B cell (primary cell): ENCODE measurements at regions of chr14 and their contacts with region 1.

Region 1: DNA sequence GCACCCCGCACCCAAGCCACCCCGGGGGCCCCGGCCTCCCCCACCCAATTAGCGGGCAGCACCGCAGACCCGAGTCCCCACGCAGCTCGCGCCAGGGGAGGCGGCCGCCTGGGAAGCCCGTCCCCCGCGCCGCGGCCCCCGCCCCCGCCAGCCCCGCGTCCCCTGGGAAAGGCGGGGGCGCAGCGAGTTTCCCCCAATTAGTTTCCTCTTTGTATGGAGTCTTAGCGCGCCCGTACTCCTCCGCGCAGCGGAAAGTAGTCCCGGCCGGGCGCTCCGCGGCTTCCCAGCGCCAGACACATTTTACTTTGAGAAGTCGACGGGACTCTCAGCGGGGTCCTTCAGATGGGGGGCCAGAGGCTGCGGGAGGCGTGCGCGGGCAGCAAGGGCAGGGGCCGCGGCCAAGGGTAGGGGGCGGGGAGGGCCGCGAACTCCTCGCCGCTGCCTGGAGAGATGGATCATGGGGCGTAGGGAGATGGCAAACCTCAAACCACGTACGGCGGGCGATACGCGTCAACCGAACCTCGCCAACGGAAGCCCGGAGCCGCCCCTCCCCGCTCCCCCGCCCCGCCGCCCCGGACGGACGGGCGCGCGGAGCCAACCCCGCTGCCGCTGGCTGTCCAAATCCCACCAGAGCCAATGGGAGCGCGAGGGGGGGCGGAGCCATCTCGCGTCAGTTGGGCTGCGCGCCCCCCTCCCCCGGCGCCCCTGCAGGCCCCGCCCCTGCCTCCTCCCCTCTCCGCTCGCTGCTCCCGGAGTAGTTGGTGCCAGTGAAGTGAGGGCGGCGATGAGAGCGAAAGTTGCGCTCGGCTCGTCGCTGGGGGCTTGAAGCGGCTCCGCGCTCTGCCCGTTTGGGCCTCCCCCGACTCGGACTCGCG is at the start of gene RCOR1:
- DNase-seq: peak; percentile 97
- ATAC-seq: peak; percentile 82
- H3K4me3 ChIP-seq: peak within 1 kb of the TSS; percentile 73 to 91 (median 83)
- H3K4me3 Mint-ChIP-seq: peak within 1 kb of the TSS; percentile 89
- H3K27ac ChIP-seq: peak within 1 kb of the TSS; percentile 82 to 95
- H3K27ac Mint-ChIP-seq: peak within 1 kb of the TSS; percentile 97
- H3K4me1 ChIP-seq: peaks cover 10 to 22% of the 10 kb centered on the region in 2 donors
- H3K4me1 Mint-ChIP-seq: peaks cover 26% of the 10 kb centered on the region
- H3K27me3 ChIP-seq: no peaks in the 10 kb centered on the region
- H3K27me3 Mint-ChIP-seq: no peaks in the 10 kb centered on the region
- CTCF ChIP-seq: no peak
- total RNA-seq, gene RCOR1: 37.1 and 38.4 TPM in 2 replicates

Region 2: DNA sequence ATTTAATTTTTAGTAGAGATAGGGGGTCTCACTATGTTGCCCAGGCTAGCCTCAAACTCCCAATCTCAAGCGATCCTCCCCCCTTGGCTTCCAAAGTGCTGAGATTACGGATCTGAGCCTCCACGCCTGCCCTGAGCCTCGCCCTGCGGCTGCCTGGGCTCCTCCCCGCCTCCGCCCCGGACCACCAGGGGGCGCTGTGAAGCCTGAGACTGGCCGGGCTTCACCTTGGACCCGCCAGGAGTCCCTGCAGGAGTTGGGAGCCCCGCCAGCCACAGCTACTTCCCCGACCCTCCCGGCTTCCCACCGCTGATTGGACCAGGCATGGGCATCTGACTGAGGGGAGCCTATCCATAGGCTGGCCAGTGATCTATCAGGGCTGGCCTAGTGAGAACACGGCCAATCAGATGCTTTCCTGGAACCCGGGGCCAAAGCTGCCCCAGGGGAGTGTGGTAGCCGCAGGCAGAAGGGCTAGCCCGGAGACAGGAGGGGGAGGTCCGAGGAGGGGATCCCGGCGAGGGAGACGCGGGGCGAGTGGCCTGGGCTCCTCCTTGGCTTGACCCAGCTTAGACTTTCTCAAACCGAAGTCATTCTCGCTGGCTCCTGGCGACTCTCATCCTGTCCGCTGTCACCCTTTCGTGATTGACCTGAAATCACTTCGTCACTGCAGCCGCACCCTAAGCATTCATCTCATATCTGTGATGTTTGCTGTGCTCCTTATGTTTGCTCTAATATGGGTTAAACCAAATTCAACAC is 67.5 kb before region 1 on chr14:
- CTCF ChIA-PET with region 1: interaction called, 32 read pairs
- POLR2A ChIA-PET with region 1: interaction called, 3 read pairs
- intact Hi-C with region 1: loop called (anchors 1 kb)
- DNase-seq: peak; percentile 92
- ATAC-seq: peak; percentile 94
- H3K4me3 ChIP-seq: peak overlapping the region; percentile 35 to 71 (median 61)
- H3K4me3 Mint-ChIP-seq: peak overlapping the region; percentile 95
- H3K27ac ChIP-seq: peak overlapping the region; percentile 56 to 63
- H3K27ac Mint-ChIP-seq: peak overlapping the region; percentile 98
- H3K4me1 ChIP-seq: peaks cover 10 to 27% of the 10 kb centered on the region in 2 donors
- H3K4me1 Mint-ChIP-seq: peaks cover 27% of the 10 kb centered on the region
- H3K27me3 ChIP-seq: no peaks in the 10 kb centered on the region
- H3K27me3 Mint-ChIP-seq: no peaks in the 10 kb centered on the region
- CTCF ChIP-seq: peak; percentile 96

Region 3: GRCh38 chr14:102608064-102608446 is 15.9 kb after region 1 on chr14:
- CTCF ChIA-PET with region 1: interaction called, 20 read pairs
- POLR2A ChIA-PET with region 1: interaction called, 4 read pairs
- intact Hi-C with region 1: no loop called
- DNase-seq: no peak
- ATAC-seq: no peak
- H3K4me3 ChIP-seq: no peak overlapping the region
- H3K4me3 Mint-ChIP-seq: peak overlapping the region; percentile 49
- H3K27ac ChIP-seq: no peak overlapping the region
- H3K27ac Mint-ChIP-seq: no peak overlapping the region
- H3K4me1 ChIP-seq: peaks cover 30 to 51% of the 10 kb centered on the region in 2 donors
- H3K4me1 Mint-ChIP-seq: peaks cover 72% of the 10 kb centered on the region
- H3K27me3 ChIP-seq: no peaks in the 10 kb centered on the region
- H3K27me3 Mint-ChIP-seq: no peaks in the 10 kb centered on the region
- CTCF ChIP-seq: no peak

Region 4: DNA sequence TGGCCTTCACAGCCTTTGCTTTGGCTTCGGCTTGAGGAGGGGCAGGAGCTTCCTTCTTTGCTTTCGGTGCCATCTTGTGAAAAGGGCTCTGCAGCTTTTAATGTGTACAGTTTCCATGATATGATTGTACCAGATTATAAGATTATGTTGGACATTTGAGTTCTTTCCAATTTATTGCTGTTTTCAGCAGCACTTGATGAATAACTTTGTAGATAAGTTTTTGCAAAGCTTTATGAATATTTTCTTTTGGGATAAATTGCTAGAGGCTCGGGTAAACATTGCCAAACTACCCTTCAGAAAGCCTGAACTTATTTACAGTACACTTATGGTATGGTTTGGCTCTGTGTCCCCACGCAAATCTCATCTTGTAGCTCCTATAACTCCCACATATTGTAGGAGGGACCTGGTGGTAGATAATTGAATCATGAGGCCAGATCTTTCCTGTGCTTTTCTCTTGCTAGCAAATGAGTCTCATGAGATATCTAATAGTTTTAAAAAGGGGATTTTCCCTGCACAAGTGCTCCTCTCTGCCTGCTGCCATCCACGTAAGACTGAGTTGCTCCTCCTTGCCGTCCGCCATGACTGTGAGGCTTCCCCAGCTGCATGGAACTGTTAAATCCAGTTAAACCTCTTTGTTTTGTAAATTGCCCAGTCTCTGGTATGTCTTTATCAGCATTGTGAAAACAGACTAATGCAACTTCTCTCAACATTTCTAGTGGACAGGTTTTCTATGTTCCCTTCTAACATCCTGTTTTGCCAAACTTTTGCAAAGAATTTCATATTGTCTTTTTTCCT is 70.7 kb after region 1 on chr14:
- CTCF ChIA-PET with region 1: no interaction called
- POLR2A ChIA-PET with region 1: no interaction called
- intact Hi-C with region 1: no loop called
- DNase-seq: no peak
- ATAC-seq: no peak
- H3K4me3 ChIP-seq: no peak overlapping the region
- H3K4me3 Mint-ChIP-seq: no peak overlapping the region
- H3K27ac ChIP-seq: no peak overlapping the region
- H3K27ac Mint-ChIP-seq: no peak overlapping the region
- H3K4me1 ChIP-seq: no peaks in the 10 kb centered on the region
- H3K4me1 Mint-ChIP-seq: peaks cover 45% of the 10 kb centered on the region
- H3K27me3 ChIP-seq: no peaks in the 10 kb centered on the region
- H3K27me3 Mint-ChIP-seq: no peaks in the 10 kb centered on the region
- CTCF ChIP-seq: no peak

Region 5: GRCh38 chr14:102768223-102769048 is 176.3 kb after region 1 on chr14:
- CTCF ChIA-PET with region 1: interaction called, 3 read pairs
- POLR2A ChIA-PET with region 1: no interaction called
- intact Hi-C with region 1: loop called (anchors 5 kb)
- DNase-seq: peak; percentile 94
- ATAC-seq: peak; percentile 95
- H3K4me3 ChIP-seq: peak overlapping the region in 1 of 5 experiments; percentile 10
- H3K4me3 Mint-ChIP-seq: peak overlapping the region; percentile 48
- H3K27ac ChIP-seq: peak overlapping the region; percentile 98
- H3K27ac Mint-ChIP-seq: peak overlapping the region; percentile 97
- H3K4me1 ChIP-seq: peaks cover 47 to 71% of the 10 kb centered on the region in 2 donors
- H3K4me1 Mint-ChIP-seq: peaks cover 68% of the 10 kb centered on the region
- H3K27me3 ChIP-seq: no peaks in the 10 kb centered on the region
- H3K27me3 Mint-ChIP-seq: no peaks in the 10 kb centered on the region
- CTCF ChIP-seq: no peak

Region 6: DNA sequence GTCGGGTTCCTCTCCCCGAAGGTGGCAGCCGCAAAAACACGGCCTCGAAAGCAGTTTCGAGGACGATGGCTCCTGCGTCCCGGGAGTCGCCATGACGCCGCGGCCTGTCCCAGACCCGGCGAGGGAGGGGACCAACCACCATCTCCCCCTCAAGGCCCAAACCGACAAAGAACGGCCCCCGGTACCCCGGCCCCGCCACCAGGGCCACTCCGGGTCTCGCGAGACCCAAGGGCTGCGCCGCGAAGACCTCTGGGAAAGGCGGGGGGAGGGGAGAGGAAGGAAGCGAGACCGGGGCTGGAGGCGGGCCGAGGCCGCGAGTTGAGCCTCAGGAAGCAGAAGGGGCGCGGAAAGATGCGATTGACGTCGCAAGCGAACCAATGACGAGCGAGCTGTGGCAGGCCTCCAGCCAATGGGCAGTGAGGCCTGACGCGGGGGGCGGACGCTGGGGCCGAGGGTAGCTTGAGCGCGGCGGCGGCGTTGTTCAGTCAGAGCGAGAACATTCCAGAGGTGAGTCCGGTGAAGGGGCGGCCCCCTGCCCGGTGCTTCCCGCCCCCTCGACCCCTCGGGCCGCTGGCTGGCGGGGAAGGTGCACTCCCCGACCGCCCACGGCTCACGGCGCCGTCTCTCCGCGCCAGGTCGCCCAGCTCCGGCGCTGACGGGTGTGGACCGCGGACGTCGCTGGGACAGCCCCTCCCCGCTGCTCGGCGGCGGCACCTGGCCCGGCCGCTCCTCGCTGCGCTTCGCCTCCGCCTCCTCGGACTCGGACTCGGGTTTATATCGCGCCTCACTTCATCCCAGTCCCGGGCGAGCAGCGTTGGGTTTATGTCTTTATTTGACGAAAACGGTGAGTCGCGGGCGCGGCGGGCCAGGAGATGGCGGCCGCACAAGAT is 741.9 kb after region 1 on chr14 and contains the start of gene EIF5:
- CTCF ChIA-PET with region 1: no interaction called
- POLR2A ChIA-PET with region 1: no interaction called
- intact Hi-C with region 1: loop called (anchors 2 kb)
- DNase-seq: peak; percentile 100
- ATAC-seq: peak; percentile 85
- H3K4me3 ChIP-seq: peak within 1 kb of the TSS; percentile 78 to 100 (median 94)
- H3K4me3 Mint-ChIP-seq: peak within 1 kb of the TSS; percentile 96
- H3K27ac ChIP-seq: peak within 1 kb of the TSS; percentile 98 to 99
- H3K27ac Mint-ChIP-seq: peak within 1 kb of the TSS; percentile 100
- H3K4me1 ChIP-seq: peaks cover 17 to 25% of the 10 kb centered on the region in 2 donors
- H3K4me1 Mint-ChIP-seq: peaks cover 42% of the 10 kb centered on the region
- H3K27me3 ChIP-seq: no peaks in the 10 kb centered on the region
- H3K27me3 Mint-ChIP-seq: no peaks in the 10 kb centered on the region
- CTCF ChIP-seq: peak; percentile 51
- total RNA-seq, gene EIF5: 314 TPM in 2 replicates